Activated CD4-positive, alpha-beta memory T cell treated with anti-CD3 and anti-CD28 coated beads, Interleukin-2, amount 10 ng/mL, durations not matched to agents 7 days and 5 days (primary cell): ENCODE measurements at regions of chr20 and their contacts with region 1.

Region 1: GRCh38 chr20:5569021-5569420 is 181.2 kb upstream of the SHLD1 start:
- DNase-seq: peak; percentile 40
- H3K4me3 Mint-ChIP-seq: no peak overlapping the region
- H3K27ac Mint-ChIP-seq: peak overlapping the region; percentile 52
- H3K4me1 Mint-ChIP-seq: peaks cover 32% of the 10 kb centered on the region
- H3K27me3 Mint-ChIP-seq: no peaks in the 10 kb centered on the region

Region 2: GRCh38 chr20:5557123-5557522 is 11.9 kb before region 1 on chr20:
- CTCF ChIA-PET with region 1: interaction called, 30 read pairs
- POLR2A ChIA-PET with region 1: interaction called, 3 read pairs
- DNase-seq: peak; percentile 68
- H3K4me3 Mint-ChIP-seq: no peak overlapping the region
- H3K27ac Mint-ChIP-seq: no peak overlapping the region
- H3K4me1 Mint-ChIP-seq: peaks cover 3% of the 10 kb centered on the region
- H3K27me3 Mint-ChIP-seq: no peaks in the 10 kb centered on the region

Region 3: DNA sequence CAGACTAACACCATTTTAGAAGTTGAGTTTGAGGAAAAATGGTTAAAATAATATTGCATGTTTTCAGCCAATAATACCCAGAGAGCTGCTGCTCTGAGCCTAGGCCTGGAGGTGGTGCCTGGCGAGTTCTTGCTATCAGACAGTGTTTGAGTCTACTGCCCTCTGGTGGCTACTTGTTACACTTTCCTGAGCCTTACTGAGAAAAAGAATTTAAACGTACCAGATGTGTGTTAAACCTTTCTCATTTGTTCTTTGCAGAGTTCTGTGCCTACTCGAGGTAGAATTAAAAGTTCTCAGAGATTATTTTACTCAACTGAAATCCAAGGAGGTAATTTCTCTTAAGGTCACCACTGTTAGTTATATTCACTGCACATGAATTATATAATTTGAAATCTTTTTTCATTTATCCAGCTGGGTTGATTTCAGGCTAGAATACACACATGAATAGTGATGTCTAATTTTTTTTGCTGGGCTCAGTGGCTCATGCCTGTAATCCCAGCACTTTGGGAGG is 219.4 kb after region 1 on chr20:
- CTCF ChIA-PET with region 1: interaction called, 58 read pairs
- POLR2A ChIA-PET with region 1: no interaction called
- DNase-seq: peak; percentile 76
- H3K4me3 Mint-ChIP-seq: no peak overlapping the region
- H3K27ac Mint-ChIP-seq: no peak overlapping the region
- H3K4me1 Mint-ChIP-seq: peaks cover 2% of the 10 kb centered on the region
- H3K27me3 Mint-ChIP-seq: no peaks in the 10 kb centered on the region